ENCODE measurements at regions of chr3 and their contacts with region 1.

Region 1: DNA sequence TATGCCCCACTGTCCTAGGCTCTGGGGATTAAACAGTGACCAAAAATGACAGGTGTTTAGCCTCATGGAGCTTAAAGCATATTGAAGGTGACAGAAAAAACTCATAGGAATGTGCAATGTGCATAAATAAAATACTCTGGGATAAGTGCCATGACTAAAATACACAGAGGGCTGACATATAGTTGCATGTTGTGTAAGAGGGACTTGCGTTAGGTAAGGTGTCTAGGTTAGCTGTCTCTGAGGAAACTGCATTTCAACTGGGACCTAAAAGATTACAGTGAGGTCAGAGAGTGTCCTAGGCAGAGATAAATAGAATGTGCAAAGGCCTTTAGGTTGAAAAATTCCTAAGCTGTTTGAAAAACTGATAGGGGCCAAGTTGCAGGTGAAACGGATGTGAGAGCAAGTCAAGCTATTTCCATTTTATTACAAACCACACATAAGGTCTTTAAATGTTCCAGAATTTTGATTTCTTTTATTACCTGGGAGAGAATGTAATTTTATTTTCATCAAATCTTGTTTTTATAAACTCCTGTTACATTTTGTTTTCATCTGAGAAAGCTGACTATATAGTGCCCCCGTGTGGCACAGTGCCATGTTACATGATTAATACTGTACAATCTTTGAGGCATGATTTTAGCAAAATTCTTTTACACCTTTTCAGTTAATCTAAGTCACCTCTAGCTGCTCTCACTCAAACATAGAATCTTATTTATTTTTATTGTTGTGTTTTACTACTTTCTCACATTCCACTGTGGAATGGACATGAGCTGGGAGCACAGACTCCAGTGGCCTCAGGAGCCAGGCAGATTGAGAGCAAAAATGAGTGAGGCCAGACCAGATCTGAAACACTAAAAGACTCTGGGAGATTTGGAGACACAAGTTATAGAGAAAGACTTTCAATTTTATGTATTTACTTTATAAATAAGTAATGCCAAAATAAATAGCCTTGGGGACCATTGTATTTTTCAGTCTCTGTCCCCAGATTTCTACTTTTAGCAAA is 259.6 kb upstream of the ZNF717 start:
- DNase-seq: peak; percentile 42
- ATAC-seq: no peak
- H3K4me3 Mint-ChIP-seq: no peak overlapping the region
- H3K27ac Mint-ChIP-seq: peak overlapping the region; percentile 99
- H3K4me1 Mint-ChIP-seq: peaks cover 71% of the 10 kb centered on the region
- H3K27me3 Mint-ChIP-seq: no peaks in the 10 kb centered on the region
- CTCF ChIP-seq: peak; percentile 52

Region 2: GRCh38 chr3:75727985-75728384 is 316.9 kb before region 1 on chr3:
- CTCF ChIA-PET with region 1: interaction called, 13 read pairs
- POLR2A ChIA-PET with region 1: no interaction called
- DNase-seq: no peak
- ATAC-seq: no peak
- H3K4me3 Mint-ChIP-seq: no peak overlapping the region
- H3K27ac Mint-ChIP-seq: no peak overlapping the region
- H3K4me1 Mint-ChIP-seq: peaks cover 6% of the 10 kb centered on the region
- H3K27me3 Mint-ChIP-seq: peaks cover 11% of the 10 kb centered on the region
- CTCF ChIP-seq: no peak

Region 3: DNA sequence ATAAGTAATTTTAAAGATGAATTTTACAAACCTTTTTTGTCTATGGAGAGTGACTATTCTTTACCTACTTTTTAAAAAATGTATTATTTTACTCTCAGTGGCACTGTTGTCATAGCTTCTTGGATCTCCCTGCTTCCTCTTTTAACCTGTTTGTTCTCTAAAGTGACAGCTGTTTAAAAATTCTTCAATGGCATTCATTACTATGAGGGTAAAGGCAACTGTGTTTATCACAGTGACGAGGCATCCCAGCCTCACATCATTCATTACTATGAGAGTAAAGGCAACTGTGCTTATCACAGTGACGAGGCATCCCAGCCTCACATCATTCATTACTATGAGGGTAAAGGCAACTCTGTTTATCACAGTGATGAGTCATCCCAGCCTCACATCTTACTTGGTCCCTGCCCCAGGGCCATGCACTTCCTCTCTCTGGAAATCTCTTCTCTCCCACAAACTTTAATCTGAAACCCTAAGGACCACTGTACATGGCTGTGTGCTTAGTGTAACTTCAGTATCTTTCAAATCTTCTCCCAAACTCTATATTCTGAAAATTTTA is 157.9 kb before region 1 on chr3:
- CTCF ChIA-PET with region 1: no interaction called
- POLR2A ChIA-PET with region 1: no interaction called
- DNase-seq: no peak
- ATAC-seq: no peak
- H3K4me3 Mint-ChIP-seq: no peak overlapping the region
- H3K27ac Mint-ChIP-seq: no peak overlapping the region
- H3K4me1 Mint-ChIP-seq: peaks cover 32% of the 10 kb centered on the region
- H3K27me3 Mint-ChIP-seq: no peaks in the 10 kb centered on the region
- CTCF ChIP-seq: no peak

Region 4: GRCh38 chr3:75906555-75907112 is 138.3 kb before region 1 on chr3:
- CTCF ChIA-PET with region 1: interaction called, 11 read pairs
- POLR2A ChIA-PET with region 1: no interaction called
- DNase-seq: peak; percentile 87
- ATAC-seq: peak; percentile 99
- H3K4me3 Mint-ChIP-seq: peak overlapping the region; percentile 92
- H3K27ac Mint-ChIP-seq: peak overlapping the region; percentile 49; the same call in 1 of the 2 replicates
- H3K4me1 Mint-ChIP-seq: peaks cover 17% of the 10 kb centered on the region
- H3K27me3 Mint-ChIP-seq: peaks cover 18% of the 10 kb centered on the region
- CTCF ChIP-seq: no peak

Region 5: GRCh38 chr3:76024640-76025039 is 20.3 kb before region 1 on chr3:
- CTCF ChIA-PET with region 1: interaction called, 25 read pairs
- POLR2A ChIA-PET with region 1: no interaction called
- DNase-seq: no peak
- ATAC-seq: peak; percentile 80
- H3K4me3 Mint-ChIP-seq: no peak overlapping the region
- H3K27ac Mint-ChIP-seq: no peak overlapping the region
- H3K4me1 Mint-ChIP-seq: peaks cover 26% of the 10 kb centered on the region
- H3K27me3 Mint-ChIP-seq: no peaks in the 10 kb centered on the region
- CTCF ChIP-seq: 0 out of 2 replicates have a peak, but pooled peaks have one; percentile 29

Region 6: GRCh38 chr3:76034652-76035051 is 10.2 kb before region 1 on chr3:
- CTCF ChIA-PET with region 1: interaction called, 21 read pairs
- POLR2A ChIA-PET with region 1: no interaction called
- DNase-seq: no peak
- ATAC-seq: peak; percentile 84
- H3K4me3 Mint-ChIP-seq: no peak overlapping the region
- H3K27ac Mint-ChIP-seq: peak overlapping the region; percentile 38
- H3K4me1 Mint-ChIP-seq: peaks cover 47% of the 10 kb centered on the region
- H3K27me3 Mint-ChIP-seq: no peaks in the 10 kb centered on the region
- CTCF ChIP-seq: no peak

Region 7: GRCh38 chr3:76063019-76063418 is 18.1 kb after region 1 on chr3:
- CTCF ChIA-PET with region 1: interaction called, 12 read pairs
- POLR2A ChIA-PET with region 1: no interaction called
- DNase-seq: no peak
- ATAC-seq: peak; percentile 32; the same call in 1 of the 2 replicates
- H3K4me3 Mint-ChIP-seq: no peak overlapping the region
- H3K27ac Mint-ChIP-seq: peak overlapping the region; percentile 93
- H3K4me1 Mint-ChIP-seq: peaks cover 48% of the 10 kb centered on the region
- H3K27me3 Mint-ChIP-seq: no peaks in the 10 kb centered on the region
- CTCF ChIP-seq: no peak

Region 8: DNA sequence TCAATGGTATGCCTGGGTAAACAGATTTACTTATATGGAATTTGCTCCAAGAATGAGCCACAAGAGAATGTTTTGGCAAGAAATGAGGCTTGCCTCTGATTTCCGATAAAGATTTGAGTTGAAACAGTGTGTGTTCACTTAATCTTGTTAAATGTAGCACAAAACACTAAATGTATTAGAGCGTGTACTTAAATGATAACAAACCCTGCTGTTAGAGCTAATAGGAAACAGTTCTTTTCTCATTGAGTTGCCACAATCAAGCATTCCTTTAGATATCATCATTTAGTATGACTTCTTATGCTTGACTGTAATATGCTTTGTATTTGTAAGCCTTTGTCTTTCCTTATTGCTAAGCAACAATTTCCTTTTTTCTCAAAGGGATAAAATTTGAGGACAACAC is 94.0 kb after region 1 on chr3:
- CTCF ChIA-PET with region 1: no interaction called
- POLR2A ChIA-PET with region 1: no interaction called
- DNase-seq: no peak
- ATAC-seq: no peak
- H3K4me3 Mint-ChIP-seq: no peak overlapping the region
- H3K27ac Mint-ChIP-seq: no peak overlapping the region
- H3K4me1 Mint-ChIP-seq: peaks cover 9% of the 10 kb centered on the region
- H3K27me3 Mint-ChIP-seq: no peaks in the 10 kb centered on the region
- CTCF ChIP-seq: no peak

Measured in WTC11 (cell line).